Activated T-helper 1 cell treated with anti-CD3 and anti-CD28 coated beads, Interleukin-12 subunit alpha, Interleukin-12 subunit beta, Interleukin-2, Interleukin-4 antibody, amounts not matched to agents 30 ng/mL and 10 ng/mL and 1 ng/mL, durations not matched to agents 14 hours and 24 hours and 36 hours (primary cell): ENCODE measurements at regions of chr6 and their contacts with region 1.

Region 1: DNA sequence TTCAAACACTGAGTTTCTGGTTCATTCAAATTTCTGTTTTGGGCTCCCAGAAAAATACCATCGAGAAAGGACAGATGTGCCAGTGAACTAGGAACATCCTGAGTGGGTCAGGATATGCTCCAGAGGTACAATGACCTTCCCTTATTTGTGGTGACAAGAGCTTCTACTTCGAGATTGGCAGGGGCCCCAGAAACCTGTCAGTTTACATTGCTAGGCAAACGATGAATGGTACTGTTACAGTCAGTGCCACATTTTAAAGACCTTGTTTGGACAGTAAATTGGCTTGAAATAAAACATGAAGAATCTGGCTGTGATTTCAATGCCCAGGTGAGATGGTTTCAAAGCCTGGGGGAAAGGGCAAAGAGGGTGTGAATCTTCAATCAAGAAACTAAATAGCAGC is 454.5 kb upstream of the ID4 start:
- DNase-seq: no peak
- H3K4me3 Mint-ChIP-seq: no peak overlapping the region
- H3K27ac Mint-ChIP-seq: no peak overlapping the region
- H3K4me1 Mint-ChIP-seq: no peaks in the 10 kb centered on the region
- H3K27me3 Mint-ChIP-seq: no peaks in the 10 kb centered on the region

Region 2: DNA sequence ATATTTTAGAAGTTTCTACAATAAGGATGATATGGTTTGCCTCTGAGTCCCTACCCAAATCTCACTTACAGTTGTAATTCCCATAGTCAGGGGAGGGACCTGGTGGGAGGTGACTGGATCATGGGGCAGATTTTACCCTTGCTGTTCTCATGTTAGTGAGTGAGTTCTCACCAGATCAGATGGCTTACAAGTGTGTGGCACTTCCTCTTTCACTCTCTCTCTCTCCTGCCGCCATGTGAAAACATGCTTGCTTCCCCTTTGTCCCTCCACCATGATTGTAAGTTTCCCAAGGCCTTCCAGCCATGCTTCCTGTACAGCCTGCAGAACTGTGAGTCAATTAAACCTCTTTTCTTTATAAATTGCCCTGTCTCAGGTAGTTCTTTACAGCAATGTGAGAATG is 73.0 kb before region 1 on chr6:
- intact Hi-C with region 1: loop called (anchors 2 kb)
- DNase-seq: no peak
- H3K4me3 Mint-ChIP-seq: no peak overlapping the region
- H3K27ac Mint-ChIP-seq: no peak overlapping the region
- H3K4me1 Mint-ChIP-seq: no peaks in the 10 kb centered on the region
- H3K27me3 Mint-ChIP-seq: no peaks in the 10 kb centered on the region

Region 3: GRCh38 chr6:19452495-19452894 is 69.8 kb after region 1 on chr6:
- intact Hi-C with region 1: no loop called
- DNase-seq: no peak
- H3K4me3 Mint-ChIP-seq: no peak overlapping the region
- H3K27ac Mint-ChIP-seq: no peak overlapping the region
- H3K4me1 Mint-ChIP-seq: no peaks in the 10 kb centered on the region
- H3K27me3 Mint-ChIP-seq: no peaks in the 10 kb centered on the region